Activated naive CD8-positive, alpha-beta T cell treated with anti-CD3 and anti-CD28 coated beads, Interleukin-2, amount 10 ng/mL, durations not matched to agents 7 days and 5 days (primary cell): ENCODE measurements at regions of chr2 and their contacts with region 1.

Region 1: GRCh38 chr2:105744909-105745853 is at the start of gene NCK2:
- DNase-seq: peak; percentile 64
- ATAC-seq: peak; percentile 5
- H3K4me3 Mint-ChIP-seq: peak within 1 kb of the TSS; percentile 93
- H3K27ac Mint-ChIP-seq: peak within 1 kb of the TSS; percentile 93
- H3K4me1 Mint-ChIP-seq: peaks cover 63% of the 10 kb centered on the region
- H3K27me3 Mint-ChIP-seq: no peaks in the 10 kb centered on the region
- total RNA-seq, gene NCK2: 69.6 to 70.0 TPM

Region 2: DNA sequence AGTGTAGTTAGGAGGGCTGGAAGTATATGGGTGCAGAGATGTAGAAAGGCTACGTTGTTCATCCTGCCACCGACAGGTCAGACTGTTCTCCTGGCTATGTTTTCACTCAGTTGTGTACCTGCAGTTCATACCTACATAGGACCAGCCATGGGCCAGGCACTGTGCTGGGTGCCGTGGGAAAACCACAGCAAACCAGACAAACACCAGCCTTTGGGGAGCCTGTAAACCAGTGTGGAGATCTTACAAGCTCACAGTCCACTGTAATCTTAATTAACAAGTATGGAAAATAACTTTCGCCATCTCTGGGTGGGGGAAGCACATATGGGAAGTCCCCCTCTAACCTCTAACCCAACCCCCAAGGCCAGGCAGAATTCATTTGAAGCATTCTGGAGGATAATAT is 12.3 kb after region 1 on chr2:
- POLR2A ChIA-PET with region 1: interaction called, 33 read pairs
- DNase-seq: no peak
- ATAC-seq: no peak
- H3K4me3 Mint-ChIP-seq: peak overlapping the region; percentile 67
- H3K27ac Mint-ChIP-seq: peak overlapping the region; percentile 85
- H3K4me1 Mint-ChIP-seq: peaks cover 78% of the 10 kb centered on the region
- H3K27me3 Mint-ChIP-seq: no peaks in the 10 kb centered on the region

Region 3: GRCh38 chr2:105775809-105776559 is 30.8 kb after region 1 on chr2:
- POLR2A ChIA-PET with region 1: interaction called, 30 read pairs
- DNase-seq: no peak
- ATAC-seq: peak; percentile 63
- H3K4me3 Mint-ChIP-seq: peak overlapping the region; percentile 80
- H3K27ac Mint-ChIP-seq: peak overlapping the region; percentile 72
- H3K4me1 Mint-ChIP-seq: peaks cover 71% of the 10 kb centered on the region
- H3K27me3 Mint-ChIP-seq: no peaks in the 10 kb centered on the region

Region 4: DNA sequence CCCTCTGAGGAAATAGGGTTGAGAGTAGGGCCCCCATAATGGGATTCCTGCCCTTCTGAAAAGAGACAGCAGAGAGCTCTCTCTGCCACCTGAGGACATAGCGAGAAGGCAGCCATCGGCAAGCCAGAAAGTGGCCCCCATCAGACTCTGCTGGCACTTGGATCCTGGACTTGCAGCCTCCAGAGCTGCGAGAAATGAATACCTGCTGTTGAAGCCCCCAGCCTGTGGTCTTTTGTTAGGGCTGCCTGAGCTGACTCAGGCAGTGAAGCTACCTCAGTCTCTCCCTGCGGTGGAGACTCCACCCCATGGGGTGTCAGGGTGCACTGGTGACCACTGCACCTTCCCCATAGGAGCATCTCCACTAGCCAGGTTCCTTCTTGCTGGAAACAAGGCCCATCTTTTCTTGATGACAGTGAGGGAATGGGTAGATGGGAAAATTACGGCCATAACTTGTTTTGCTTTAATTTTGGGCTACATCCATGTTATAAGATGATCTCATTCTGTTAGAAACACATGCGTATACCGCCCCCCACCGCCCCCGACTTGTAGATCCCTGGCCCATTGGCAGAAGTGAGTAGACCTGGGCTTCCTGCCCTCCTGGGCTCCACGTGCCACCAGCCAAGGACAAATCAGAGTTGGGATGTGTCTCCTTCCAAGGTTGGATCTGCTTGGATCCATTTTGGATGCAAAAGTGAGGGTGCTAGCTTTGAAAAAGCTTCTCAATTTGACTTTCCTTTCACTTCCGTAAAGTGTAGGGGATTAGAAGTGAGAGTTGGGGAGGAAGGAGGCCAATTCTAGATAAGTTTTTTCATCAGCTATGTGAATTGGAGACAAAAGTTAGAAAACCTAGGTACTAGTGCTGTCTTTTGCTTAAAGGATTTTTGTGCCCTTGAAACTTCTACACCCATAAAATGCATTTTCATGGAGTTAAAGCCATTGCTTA is 42.5 kb after region 1 on chr2:
- POLR2A ChIA-PET with region 1: interaction called, 11 read pairs
- DNase-seq: peak; percentile 60
- ATAC-seq: no peak
- H3K4me3 Mint-ChIP-seq: peak overlapping the region; percentile 60
- H3K27ac Mint-ChIP-seq: peak overlapping the region; percentile 90
- H3K4me1 Mint-ChIP-seq: peaks cover 82% of the 10 kb centered on the region
- H3K27me3 Mint-ChIP-seq: no peaks in the 10 kb centered on the region

Region 5: DNA sequence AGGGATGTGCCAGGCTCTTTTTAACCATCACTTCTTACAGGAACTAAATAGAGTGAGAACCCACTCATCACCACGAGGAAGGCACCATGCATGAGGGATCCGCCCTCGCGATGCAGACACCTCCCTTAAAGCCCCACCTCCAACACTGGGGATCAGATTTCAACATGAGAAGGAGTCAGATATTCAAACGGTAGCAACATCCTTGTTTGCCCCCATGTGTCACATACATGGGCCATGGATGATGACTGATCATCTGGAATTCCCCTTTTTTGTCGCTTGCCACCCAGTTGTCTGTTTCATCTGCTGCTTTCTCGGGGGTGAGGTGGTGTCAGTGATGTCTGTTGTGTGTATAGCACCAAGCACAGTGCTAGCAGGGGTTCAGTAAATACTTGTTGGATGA is 57.4 kb after region 1 on chr2:
- POLR2A ChIA-PET with region 1: interaction called, 14 read pairs
- DNase-seq: no peak
- ATAC-seq: peak; percentile 48
- H3K4me3 Mint-ChIP-seq: peak overlapping the region; percentile 48
- H3K27ac Mint-ChIP-seq: peak overlapping the region; percentile 95
- H3K4me1 Mint-ChIP-seq: peaks cover 78% of the 10 kb centered on the region
- H3K27me3 Mint-ChIP-seq: no peaks in the 10 kb centered on the region

Region 6: GRCh38 chr2:105866216-105867185 is 121.3 kb after region 1 on chr2:
- POLR2A ChIA-PET with region 1: no interaction called
- DNase-seq: no peak
- ATAC-seq: no peak
- H3K4me3 Mint-ChIP-seq: no peak overlapping the region
- H3K27ac Mint-ChIP-seq: no peak overlapping the region
- H3K4me1 Mint-ChIP-seq: peaks cover 46% of the 10 kb centered on the region
- H3K27me3 Mint-ChIP-seq: no peaks in the 10 kb centered on the region